ENCODE measurements at regions of chr1 and their contacts with region 1.

Region 1: GRCh38 chr1:165597883-165598675 is 33.0 kb upstream of the MGST3 start:
- DNase-seq: peak; percentile 98
- ATAC-seq: peak; percentile 95
- H3K4me3 Mint-ChIP-seq: peak overlapping the region; percentile 84
- H3K27ac Mint-ChIP-seq: peak overlapping the region; percentile 92
- H3K4me1 Mint-ChIP-seq: peaks cover 33% of the 10 kb centered on the region
- H3K27me3 Mint-ChIP-seq: peaks cover 27% of the 10 kb centered on the region

Region 2: GRCh38 chr1:165367375-165367993 is 230.6 kb before region 1 on chr1:
- CTCF ChIA-PET with region 1: interaction called, 6 read pairs
- POLR2A ChIA-PET with region 1: no interaction called
- intact Hi-C with region 1: loop called in 1 of 2 experiments (anchors 1 kb)
- DNase-seq: peak; percentile 89
- ATAC-seq: peak; percentile 57
- H3K4me3 Mint-ChIP-seq: no peak overlapping the region
- H3K27ac Mint-ChIP-seq: no peak overlapping the region
- H3K4me1 Mint-ChIP-seq: no peaks in the 10 kb centered on the region
- H3K27me3 Mint-ChIP-seq: peaks cover 62% of the 10 kb centered on the region

Region 3: DNA sequence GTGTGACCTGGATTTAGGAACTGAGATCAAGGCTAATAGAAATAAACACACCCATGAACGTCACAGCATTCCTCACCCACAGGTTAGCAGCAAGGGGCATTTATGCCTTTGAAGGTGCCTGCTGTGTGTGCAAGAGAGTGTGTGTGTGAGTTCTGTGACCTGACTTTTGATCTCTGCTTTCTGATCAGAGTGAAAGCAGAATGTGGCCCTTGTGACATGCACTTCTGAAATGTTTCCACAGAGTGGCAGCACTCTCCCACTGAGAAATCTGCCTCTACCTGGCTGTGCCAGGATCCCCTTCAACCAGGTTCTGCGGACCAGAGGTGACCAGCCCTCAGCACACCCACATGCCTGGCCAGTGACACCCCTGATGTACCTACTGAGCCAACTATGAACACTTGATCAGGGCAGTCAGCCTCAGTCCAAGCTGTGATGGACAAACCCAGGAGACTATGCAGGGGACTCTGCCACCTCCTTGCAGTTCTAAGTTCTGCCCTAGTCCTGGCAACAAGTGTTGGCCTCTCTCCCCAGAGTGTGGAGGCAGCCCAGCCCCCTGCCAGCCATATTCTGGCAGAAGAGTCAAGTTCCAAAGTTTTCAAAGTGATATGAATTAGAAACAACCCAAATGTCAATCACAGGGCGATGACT is 194.1 kb before region 1 on chr1:
- CTCF ChIA-PET with region 1: interaction called, 47 read pairs
- POLR2A ChIA-PET with region 1: no interaction called
- intact Hi-C with region 1: loop called (anchors 1 kb)
- DNase-seq: peak; percentile 58
- ATAC-seq: peak; percentile 83
- H3K4me3 Mint-ChIP-seq: no peak overlapping the region
- H3K27ac Mint-ChIP-seq: no peak overlapping the region
- H3K4me1 Mint-ChIP-seq: no peaks in the 10 kb centered on the region
- H3K27me3 Mint-ChIP-seq: peaks cover 34% of the 10 kb centered on the region

Region 4: DNA sequence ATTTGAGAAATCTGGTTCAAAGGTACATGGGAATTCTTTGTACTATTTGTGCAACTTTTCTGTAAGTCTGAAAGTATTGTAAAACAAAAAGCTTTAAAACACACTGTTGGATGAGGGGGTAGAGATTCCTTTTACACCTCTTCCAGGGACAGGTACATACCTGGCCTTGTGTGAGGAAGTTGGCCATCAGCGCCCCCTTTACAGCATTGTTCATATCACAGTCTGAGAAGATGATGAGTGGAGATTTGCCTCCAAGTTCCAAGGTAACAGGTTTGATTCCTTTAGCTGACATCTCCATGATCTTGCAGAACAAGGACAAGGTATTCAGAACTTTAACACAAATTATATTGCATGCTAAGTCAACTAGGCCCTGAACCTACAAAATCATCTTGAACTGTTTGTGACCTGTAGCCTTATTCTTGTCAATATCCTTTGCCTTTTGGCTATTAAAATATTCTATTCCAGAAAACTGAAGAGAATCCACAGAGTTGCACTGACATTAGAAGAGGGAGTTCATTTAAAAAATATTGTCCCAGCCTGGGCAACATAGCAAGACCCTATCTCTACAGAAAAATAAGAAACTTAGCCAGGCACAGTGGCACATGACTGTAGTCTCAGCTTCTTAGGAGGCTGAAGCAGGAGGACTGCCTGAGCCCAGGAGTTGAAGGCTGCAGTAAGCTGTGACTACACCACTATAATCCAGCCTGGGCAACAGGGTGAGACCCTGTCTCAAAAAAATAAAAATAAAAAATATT is 81.4 kb after region 1 on chr1:
- CTCF ChIA-PET with region 1: interaction called, 4 read pairs
- POLR2A ChIA-PET with region 1: no interaction called
- intact Hi-C with region 1: loop called in 1 of 2 experiments (anchors 5 kb)
- DNase-seq: no peak
- ATAC-seq: no peak
- H3K4me3 Mint-ChIP-seq: no peak overlapping the region
- H3K27ac Mint-ChIP-seq: peak overlapping the region; percentile 14
- H3K4me1 Mint-ChIP-seq: peaks cover 21% of the 10 kb centered on the region
- H3K27me3 Mint-ChIP-seq: no peaks in the 10 kb centered on the region

Region 5: DNA sequence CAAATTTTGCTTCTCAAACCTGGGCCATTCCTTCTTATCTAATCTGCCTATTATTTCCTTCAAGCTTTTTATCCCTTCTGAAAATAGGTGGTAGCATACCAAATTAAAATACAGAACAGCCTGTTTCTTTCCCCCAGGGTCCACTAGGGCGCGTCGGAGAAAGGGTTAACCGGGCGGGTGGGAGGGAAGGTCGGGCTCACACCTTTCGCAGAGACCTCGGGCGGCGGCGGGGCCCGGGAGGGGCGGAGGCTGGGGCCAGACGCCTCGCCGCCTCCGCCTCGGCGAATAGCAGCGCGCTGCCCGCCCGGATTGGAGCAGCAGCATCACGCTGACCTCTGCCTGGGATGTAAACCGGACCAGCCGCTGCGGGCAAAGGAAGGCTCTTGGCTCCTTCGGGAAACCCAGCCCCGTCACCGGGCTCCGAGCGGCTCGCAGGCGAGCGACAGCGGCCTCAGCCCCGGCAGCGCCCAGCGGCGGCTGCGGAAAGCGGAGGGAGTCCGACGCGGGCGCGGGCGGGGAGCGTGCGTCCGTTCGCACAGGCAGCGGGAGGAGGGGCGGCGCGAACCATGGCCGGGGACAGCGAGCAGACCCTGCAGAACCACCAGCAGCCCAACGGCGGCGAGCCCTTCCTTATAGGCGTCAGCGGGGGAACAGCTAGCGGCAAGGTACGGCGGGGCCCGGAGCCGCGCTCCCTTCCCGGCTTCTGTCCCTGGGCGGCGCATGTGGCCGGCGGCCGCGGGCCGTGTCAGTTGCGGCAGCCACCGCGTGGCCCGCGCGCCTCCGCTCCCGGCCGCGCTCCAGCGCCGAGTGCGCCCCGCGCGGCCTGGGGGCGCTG is 229.4 kb after region 1 on chr1 and contains the start of gene UCK2:
- CTCF ChIA-PET with region 1: interaction called, 4 read pairs
- POLR2A ChIA-PET with region 1: interaction called, 3 read pairs
- intact Hi-C with region 1: loop called in 1 of 2 experiments (anchors 1 kb)
- DNase-seq: peak; percentile 83
- ATAC-seq: peak; percentile 76
- H3K4me3 Mint-ChIP-seq: peak within 1 kb of the TSS; percentile 96
- H3K27ac Mint-ChIP-seq: peak within 1 kb of the TSS; percentile 92
- H3K4me1 Mint-ChIP-seq: peaks cover 13% of the 10 kb centered on the region
- H3K27me3 Mint-ChIP-seq: no peaks in the 10 kb centered on the region
- total RNA-seq, gene UCK2: 69.4 to 81.5 TPM

Region 6: DNA sequence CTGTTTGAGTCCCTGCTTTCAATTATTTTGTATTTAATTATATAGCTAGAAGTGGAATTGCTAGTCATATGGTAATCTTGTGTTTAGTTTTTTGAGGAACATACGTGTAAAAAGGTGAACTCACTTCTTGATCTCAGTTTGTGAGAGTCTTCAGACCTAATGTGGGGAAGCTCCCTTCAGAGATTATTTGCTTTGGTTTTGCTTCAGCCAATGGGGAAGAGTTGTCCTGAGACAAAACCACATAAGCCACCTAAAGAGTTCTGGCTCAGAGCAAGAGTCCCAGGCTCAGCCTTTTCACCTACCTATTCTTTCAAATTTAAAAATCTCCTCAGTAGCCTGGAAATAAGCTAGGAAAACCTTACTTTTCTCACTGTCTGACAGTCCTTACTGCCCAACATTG is 367.8 kb after region 1 on chr1:
- CTCF ChIA-PET with region 1: no interaction called
- POLR2A ChIA-PET with region 1: no interaction called
- intact Hi-C with region 1: no loop called
- DNase-seq: no peak
- ATAC-seq: no peak
- H3K4me3 Mint-ChIP-seq: no peak overlapping the region
- H3K27ac Mint-ChIP-seq: no peak overlapping the region
- H3K4me1 Mint-ChIP-seq: no peaks in the 10 kb centered on the region
- H3K27me3 Mint-ChIP-seq: peaks cover 9% of the 10 kb centered on the region

Region 7: DNA sequence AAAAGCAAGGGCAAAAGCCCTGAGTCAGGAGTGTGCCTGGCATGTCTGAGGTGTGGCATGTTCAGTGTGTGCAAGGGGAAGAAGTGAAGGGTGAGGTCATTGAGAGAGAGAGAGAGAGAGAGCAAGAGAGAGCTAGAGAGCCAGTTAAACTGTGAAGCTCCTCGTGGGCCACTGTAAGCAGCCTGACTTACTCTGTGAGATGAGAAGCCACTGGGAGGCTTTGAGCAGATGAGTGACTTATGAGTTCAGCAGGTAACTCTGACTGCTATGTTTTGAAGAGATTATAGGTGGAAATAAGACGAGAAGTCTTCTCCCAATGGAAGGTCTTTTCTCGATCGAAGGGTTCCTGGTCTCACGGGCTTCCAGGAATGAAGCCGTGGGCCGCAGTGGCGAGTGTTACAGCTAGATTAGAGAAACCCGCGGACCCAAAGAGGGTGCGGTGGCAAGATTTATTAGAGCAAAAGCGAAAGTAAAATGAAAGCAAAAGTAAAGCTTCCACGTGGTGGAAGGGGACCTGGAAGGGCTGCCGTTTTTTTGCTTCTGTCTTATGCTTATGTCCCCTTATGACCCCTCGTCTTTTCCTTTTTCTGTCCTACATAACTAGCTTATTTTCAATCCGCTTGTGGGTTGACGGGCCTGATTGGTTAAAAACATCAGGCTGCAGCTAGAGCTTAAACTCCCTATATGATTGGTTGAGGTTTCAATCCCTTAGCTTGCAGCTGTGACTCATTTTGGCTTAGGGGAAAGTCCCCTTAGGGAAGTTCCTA is 891.8 kb after region 1 on chr1:
- CTCF ChIA-PET with region 1: no interaction called
- POLR2A ChIA-PET with region 1: no interaction called
- intact Hi-C with region 1: loop called in 1 of 2 experiments (anchors 10 kb)
- DNase-seq: peak; percentile 63
- ATAC-seq: peak; percentile 81
- H3K4me3 Mint-ChIP-seq: no peak overlapping the region
- H3K27ac Mint-ChIP-seq: no peak overlapping the region
- H3K4me1 Mint-ChIP-seq: peaks cover 6% of the 10 kb centered on the region
- H3K27me3 Mint-ChIP-seq: no peaks in the 10 kb centered on the region